ENCODE measurements at regions of chr13 and their contacts with region 1.

Region 1: GRCh38 chr13:99955747-99956472 is 15.7 kb downstream of the ZIC5 start:
- DNase-seq: no peak

Region 2: GRCh38 chr13:99990126-99990977 is 34.4 kb after region 1 on chr13:
- intact Hi-C with region 1: loop called (anchors 5 kb)
- DNase-seq: no peak

Region 3: GRCh38 chr13:100917011-100917410 is 961.1 kb after region 1 on chr13:
- intact Hi-C with region 1: no loop called
- DNase-seq: no peak